T-cell (primary cell): ENCODE measurements at regions of chr7 and their contacts with region 1.

Region 1: DNA sequence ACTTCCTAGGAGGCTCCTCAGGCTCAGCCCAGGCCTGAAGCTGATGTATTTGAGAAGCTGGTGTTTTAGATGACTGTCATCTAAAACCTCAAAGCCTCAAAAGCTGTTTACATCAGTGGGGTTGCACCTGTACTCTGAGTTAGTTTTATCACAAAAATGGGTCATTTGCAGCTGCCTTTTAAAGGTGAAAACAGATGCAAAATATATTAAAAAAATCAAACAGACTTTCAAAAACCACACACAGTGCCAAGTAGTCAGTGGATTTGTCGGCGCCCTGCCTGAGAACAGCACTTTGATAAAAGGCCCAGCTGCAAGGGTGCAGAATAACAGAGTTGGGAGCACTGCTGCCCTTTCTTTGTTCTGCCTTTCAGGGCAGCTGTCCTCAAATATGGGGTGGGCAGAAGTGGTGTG is 103.0 kb downstream of the VOPP1 start:
- DNase-seq: peak in 34 of 35 experiments; percentile 18 to 72 (median 42)
- ATAC-seq: peak; percentile 87 to 90 (median 88)
- H3K4me3 ChIP-seq: no peak overlapping the region
- H3K4me3 Mint-ChIP-seq: peak overlapping the region; percentile 43 to 70 (median 58)
- H3K27ac ChIP-seq: peak overlapping the region; percentile 77
- H3K27ac Mint-ChIP-seq: peak overlapping the region; percentile 89 to 93
- H3K4me1 ChIP-seq: peaks cover 27 to 76% of the 10 kb centered on the region in 2 experiments
- H3K4me1 Mint-ChIP-seq: peaks cover 72 to 84% (median 73%) of the 10 kb centered on the region in 3 donors
- H3K27me3 ChIP-seq: no peaks in the 10 kb centered on the region
- H3K27me3 Mint-ChIP-seq: no peaks in the 10 kb centered on the region

Region 2: GRCh38 chr7:55733241-55734140 is 264.2 kb after region 1 on chr7:
- CTCF ChIA-PET with region 1: no interaction called
- POLR2A ChIA-PET with region 1: no interaction called
- DNase-seq: no peak
- ATAC-seq: no peak
- H3K4me3 ChIP-seq: no peak overlapping the region
- H3K4me3 Mint-ChIP-seq: no peak overlapping the region
- H3K27ac ChIP-seq: no peak overlapping the region
- H3K27ac Mint-ChIP-seq: no peak overlapping the region
- H3K4me1 ChIP-seq: no peaks in the 10 kb centered on the region
- H3K4me1 Mint-ChIP-seq: no peaks in the 10 kb centered on the region
- H3K27me3 ChIP-seq: no peaks in the 10 kb centered on the region
- H3K27me3 Mint-ChIP-seq: no peaks in the 10 kb centered on the region

Region 3: DNA sequence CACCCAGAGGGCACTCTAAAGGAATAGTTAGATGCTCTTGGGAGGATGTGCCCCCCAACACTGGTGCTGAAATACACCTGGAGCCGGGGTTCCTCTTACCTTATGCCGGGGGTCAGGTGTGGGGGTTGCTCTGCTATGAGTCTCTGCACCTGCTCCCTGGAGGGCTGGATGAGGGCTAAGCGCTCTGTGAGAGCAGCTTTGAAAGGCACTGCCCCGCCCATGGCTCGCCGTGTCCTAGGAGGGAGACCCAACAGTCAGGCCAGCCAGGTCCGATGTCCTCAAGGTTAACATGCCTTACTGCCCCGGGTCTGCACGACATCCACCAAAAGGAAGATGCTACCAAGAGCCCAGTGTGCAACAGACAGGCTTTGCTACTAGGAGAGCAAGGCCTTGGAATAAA is 550.2 kb after region 1 on chr7:
- CTCF ChIA-PET with region 1: no interaction called
- POLR2A ChIA-PET with region 1: interaction called in 1 of 2 experiments, 11 read pairs
- DNase-seq: no peak
- ATAC-seq: no peak
- H3K4me3 ChIP-seq: no peak overlapping the region
- H3K4me3 Mint-ChIP-seq: no peak overlapping the region
- H3K27ac ChIP-seq: no peak overlapping the region
- H3K27ac Mint-ChIP-seq: no peak overlapping the region
- H3K4me1 ChIP-seq: no peaks in the 10 kb centered on the region
- H3K4me1 Mint-ChIP-seq: peaks cover 0 to 2% (median 1%) of the 10 kb centered on the region in 3 donors
- H3K27me3 ChIP-seq: no peaks in the 10 kb centered on the region
- H3K27me3 Mint-ChIP-seq: no peaks in the 10 kb centered on the region